ENCODE measurements at regions of chr6 and their contacts with region 1.

Region 1: GRCh38 chr6:129251669-129252376 is 368.9 kb downstream of the LAMA2 start:
- DNase-seq: peak; percentile 32
- H3K4me3 ChIP-seq: no peak overlapping the region
- H3K27ac ChIP-seq: no peak overlapping the region
- H3K27me3 ChIP-seq: no peaks in the 10 kb centered on the region
- CTCF ChIP-seq: peak; percentile 86

Region 2: DNA sequence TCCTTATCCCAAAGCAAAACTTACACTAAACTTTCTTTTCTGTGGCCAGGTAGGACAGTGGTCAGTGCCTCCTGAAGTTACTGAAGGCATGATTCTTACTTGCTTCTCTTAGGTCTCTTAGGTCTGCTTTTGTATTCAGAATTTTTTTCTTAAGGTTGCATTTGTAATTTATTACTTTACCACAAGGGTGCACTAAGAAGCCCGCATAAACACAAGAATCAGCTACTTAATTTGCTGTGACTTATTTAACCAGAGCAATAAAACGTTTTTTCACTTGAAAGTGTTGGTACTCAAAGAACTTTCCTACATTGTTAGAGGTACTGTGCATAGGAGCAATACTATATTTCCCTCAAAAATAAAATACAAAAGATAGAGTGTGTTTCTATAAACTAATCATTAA is 444.2 kb before region 1 on chr6:
- CTCF ChIA-PET with region 1: interaction called, 33 read pairs
- POLR2A ChIA-PET with region 1: no interaction called
- DNase-seq: peak; percentile 11
- H3K4me3 ChIP-seq: no peak overlapping the region
- H3K27ac ChIP-seq: no peak overlapping the region
- H3K27me3 ChIP-seq: no peaks in the 10 kb centered on the region
- CTCF ChIP-seq: peak; percentile 69

Region 3: GRCh38 chr6:129264480-129265045 is 12.7 kb after region 1 on chr6:
- CTCF ChIA-PET with region 1: interaction called, 10 read pairs
- POLR2A ChIA-PET with region 1: no interaction called
- DNase-seq: no peak
- H3K4me3 ChIP-seq: no peak overlapping the region
- H3K27ac ChIP-seq: no peak overlapping the region
- H3K27me3 ChIP-seq: no peaks in the 10 kb centered on the region
- CTCF ChIP-seq: no peak